CD4-positive, alpha-beta T cell (primary cell): ENCODE measurements at regions of chr20 and their contacts with region 1.

Region 1: DNA sequence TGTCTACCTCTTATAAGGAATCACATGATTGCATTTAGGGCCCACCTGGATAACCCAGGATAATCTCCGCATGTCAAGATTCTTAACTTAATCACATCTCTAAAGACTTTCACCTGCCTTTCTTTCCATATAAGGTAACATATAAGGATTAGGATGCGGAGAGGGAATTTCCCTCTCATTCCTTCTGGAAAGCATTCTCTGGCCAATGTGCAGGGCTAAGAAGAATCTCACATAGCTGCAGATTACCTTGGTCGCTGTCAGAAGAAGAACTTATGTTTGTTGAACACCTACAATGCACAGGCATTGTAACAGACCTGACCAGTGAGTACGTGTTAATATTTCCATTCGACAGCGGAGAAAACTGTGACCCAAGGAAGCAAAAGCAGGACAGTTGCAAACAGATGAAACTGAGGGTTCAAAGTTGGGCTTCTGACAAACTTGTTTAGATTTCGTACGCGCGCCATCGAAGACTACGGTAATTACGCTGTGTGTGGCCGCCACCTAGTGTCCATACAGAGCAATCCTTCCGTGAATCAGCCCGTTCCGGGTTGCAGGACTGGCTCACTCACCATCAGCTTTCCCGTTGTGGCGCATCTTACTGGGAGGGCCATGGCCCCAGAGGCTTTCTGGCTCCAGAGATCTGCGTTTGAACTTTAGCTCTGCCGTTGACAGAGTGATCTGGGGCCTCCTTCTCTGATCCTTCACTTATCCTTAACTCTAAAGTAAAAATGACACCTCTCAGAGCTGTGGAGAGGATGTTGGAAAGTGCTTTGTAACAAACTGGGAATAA is 9.5 kb downstream of the C20orf202 start:
- DNase-seq: peak; percentile 54 to 84 (median 61)
- ATAC-seq: peak; percentile 87
- H3K4me3 ChIP-seq: no peak overlapping the region
- H3K4me3 Mint-ChIP-seq: no peak overlapping the region
- H3K27ac ChIP-seq: no peak overlapping the region
- H3K27ac Mint-ChIP-seq: no peak overlapping the region
- H3K4me1 ChIP-seq: peaks cover 30% of the 10 kb centered on the region
- H3K4me1 Mint-ChIP-seq: peaks cover 42% of the 10 kb centered on the region
- H3K27me3 ChIP-seq: no peaks in the 10 kb centered on the region
- H3K27me3 Mint-ChIP-seq: peaks cover 10% of the 10 kb centered on the region
- CTCF ChIP-seq: peak; percentile 88

Region 2: GRCh38 chr20:815914-816606 is 396.7 kb before region 1 on chr20:
- CTCF ChIA-PET with region 1: no interaction called
- POLR2A ChIA-PET with region 1: no interaction called
- intact Hi-C with region 1: loop called (anchors 1 to 2 kb)
- DNase-seq: peak; percentile 49 to 87 (median 61)
- ATAC-seq: peak; percentile 64
- H3K4me3 ChIP-seq: no peak overlapping the region
- H3K4me3 Mint-ChIP-seq: no peak overlapping the region
- H3K27ac ChIP-seq: no peak overlapping the region
- H3K27ac Mint-ChIP-seq: peak overlapping the region; percentile 12
- H3K4me1 ChIP-seq: peaks cover 4% of the 10 kb centered on the region
- H3K4me1 Mint-ChIP-seq: peaks cover 4% of the 10 kb centered on the region
- H3K27me3 ChIP-seq: no peaks in the 10 kb centered on the region
- H3K27me3 Mint-ChIP-seq: peaks cover 26% of the 10 kb centered on the region
- CTCF ChIP-seq: peak; percentile 98

Region 3: DNA sequence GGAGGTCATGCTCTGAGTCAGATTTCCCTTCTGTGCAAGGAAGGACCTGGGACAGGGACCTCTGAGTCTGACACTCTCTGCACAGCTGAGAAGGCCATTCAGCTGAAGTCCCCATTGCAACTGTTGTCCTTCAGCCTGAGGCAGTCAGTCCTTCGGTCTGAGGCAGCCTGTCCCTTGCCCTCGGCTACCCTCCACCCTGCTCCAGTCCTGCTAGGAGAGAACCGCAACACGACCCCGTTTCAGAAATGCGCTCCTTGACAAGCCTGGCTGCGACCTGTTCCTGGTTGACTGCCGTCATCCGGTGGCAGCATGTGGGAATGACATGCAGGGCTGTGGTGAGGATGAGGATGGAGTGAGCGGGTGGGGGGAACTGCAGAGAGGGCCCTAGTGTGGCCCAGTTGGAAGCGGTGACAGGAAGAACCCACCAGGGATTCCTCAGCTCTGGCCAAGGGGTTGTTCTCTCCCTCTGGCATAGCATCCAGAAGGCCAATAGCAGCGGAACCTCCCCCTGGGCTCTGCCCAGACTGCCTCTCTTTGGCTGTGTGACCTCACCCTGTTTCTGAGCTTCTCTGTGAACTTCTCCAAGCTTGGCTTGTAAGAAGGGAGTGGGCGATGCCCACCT is 256.4 kb before region 1 on chr20:
- CTCF ChIA-PET with region 1: interaction called, 3 read pairs
- POLR2A ChIA-PET with region 1: no interaction called
- intact Hi-C with region 1: loop called in 1 of 2 experiments (anchors 2 kb)
- DNase-seq: peak; percentile 56 to 84 (median 68)
- ATAC-seq: peak; percentile 88
- H3K4me3 ChIP-seq: no peak overlapping the region
- H3K4me3 Mint-ChIP-seq: no peak overlapping the region
- H3K27ac ChIP-seq: no peak overlapping the region
- H3K27ac Mint-ChIP-seq: no peak overlapping the region
- H3K4me1 ChIP-seq: peaks cover 4% of the 10 kb centered on the region
- H3K4me1 Mint-ChIP-seq: peaks cover 5% of the 10 kb centered on the region
- H3K27me3 ChIP-seq: peaks cover 11 to 17% of the 10 kb centered on the region in 2 experiments
- H3K27me3 Mint-ChIP-seq: peaks cover 66% of the 10 kb centered on the region
- CTCF ChIP-seq: peak; percentile 99

Region 4: GRCh38 chr20:973785-974194 is 239.0 kb before region 1 on chr20:
- CTCF ChIA-PET with region 1: no interaction called
- POLR2A ChIA-PET with region 1: no interaction called
- intact Hi-C with region 1: loop called (anchors 2 to 5 kb)
- DNase-seq: peak in 6 of 14 experiments; percentile 4 to 60 (median 24)
- ATAC-seq: peak; percentile 85
- H3K4me3 ChIP-seq: no peak overlapping the region
- H3K4me3 Mint-ChIP-seq: no peak overlapping the region
- H3K27ac ChIP-seq: no peak overlapping the region
- H3K27ac Mint-ChIP-seq: no peak overlapping the region
- H3K4me1 ChIP-seq: peaks cover 5% of the 10 kb centered on the region
- H3K4me1 Mint-ChIP-seq: no peaks in the 10 kb centered on the region
- H3K27me3 ChIP-seq: no peaks in the 10 kb centered on the region
- H3K27me3 Mint-ChIP-seq: peaks cover 5% of the 10 kb centered on the region
- CTCF ChIP-seq: peak; percentile 36

Region 5: GRCh38 chr20:1050440-1050839 is 162.4 kb before region 1 on chr20:
- CTCF ChIA-PET with region 1: no interaction called
- POLR2A ChIA-PET with region 1: no interaction called
- intact Hi-C with region 1: no loop called
- DNase-seq: no peak
- ATAC-seq: no peak
- H3K4me3 ChIP-seq: no peak overlapping the region
- H3K4me3 Mint-ChIP-seq: no peak overlapping the region
- H3K27ac ChIP-seq: no peak overlapping the region
- H3K27ac Mint-ChIP-seq: no peak overlapping the region
- H3K4me1 ChIP-seq: no peaks in the 10 kb centered on the region
- H3K4me1 Mint-ChIP-seq: no peaks in the 10 kb centered on the region
- H3K27me3 ChIP-seq: no peaks in the 10 kb centered on the region
- H3K27me3 Mint-ChIP-seq: no peaks in the 10 kb centered on the region
- CTCF ChIP-seq: no peak

Region 6: DNA sequence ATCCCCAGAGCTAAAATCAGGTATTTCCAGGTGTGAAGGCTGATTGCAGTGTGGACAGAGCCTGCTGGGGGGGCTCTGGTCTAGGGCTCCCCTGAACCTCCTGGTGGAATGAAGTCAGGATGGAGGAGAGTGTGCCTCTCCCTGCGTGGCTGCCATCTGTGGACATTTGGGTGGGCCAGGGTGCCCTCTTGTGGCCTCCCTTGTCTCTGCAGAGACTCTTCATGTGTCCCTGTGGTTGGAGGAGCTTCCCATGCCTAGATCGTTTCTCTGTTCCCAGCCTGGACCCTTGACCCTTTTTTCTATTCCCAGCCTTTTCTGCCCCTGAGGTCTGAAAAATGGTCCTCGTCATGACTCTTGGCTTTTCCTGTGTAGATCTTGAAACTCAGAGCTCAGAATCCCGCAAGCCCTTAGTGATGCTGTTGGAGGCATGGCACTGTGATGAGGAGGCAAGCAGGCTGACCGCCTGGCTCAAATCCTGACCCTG is 104.3 kb before region 1 on chr20:
- CTCF ChIA-PET with region 1: interaction called, 10 read pairs
- POLR2A ChIA-PET with region 1: interaction called, 3 read pairs
- intact Hi-C with region 1: loop called (anchors 2 kb)
- DNase-seq: peak; percentile 17 to 69 (median 44)
- ATAC-seq: peak; percentile 79
- H3K4me3 ChIP-seq: no peak overlapping the region
- H3K4me3 Mint-ChIP-seq: no peak overlapping the region
- H3K27ac ChIP-seq: no peak overlapping the region
- H3K27ac Mint-ChIP-seq: no peak overlapping the region
- H3K4me1 ChIP-seq: peaks cover 6% of the 10 kb centered on the region
- H3K4me1 Mint-ChIP-seq: peaks cover 7% of the 10 kb centered on the region
- H3K27me3 ChIP-seq: no peaks in the 10 kb centered on the region
- H3K27me3 Mint-ChIP-seq: peaks cover 6% of the 10 kb centered on the region
- CTCF ChIP-seq: peak; percentile 67

Region 7: DNA sequence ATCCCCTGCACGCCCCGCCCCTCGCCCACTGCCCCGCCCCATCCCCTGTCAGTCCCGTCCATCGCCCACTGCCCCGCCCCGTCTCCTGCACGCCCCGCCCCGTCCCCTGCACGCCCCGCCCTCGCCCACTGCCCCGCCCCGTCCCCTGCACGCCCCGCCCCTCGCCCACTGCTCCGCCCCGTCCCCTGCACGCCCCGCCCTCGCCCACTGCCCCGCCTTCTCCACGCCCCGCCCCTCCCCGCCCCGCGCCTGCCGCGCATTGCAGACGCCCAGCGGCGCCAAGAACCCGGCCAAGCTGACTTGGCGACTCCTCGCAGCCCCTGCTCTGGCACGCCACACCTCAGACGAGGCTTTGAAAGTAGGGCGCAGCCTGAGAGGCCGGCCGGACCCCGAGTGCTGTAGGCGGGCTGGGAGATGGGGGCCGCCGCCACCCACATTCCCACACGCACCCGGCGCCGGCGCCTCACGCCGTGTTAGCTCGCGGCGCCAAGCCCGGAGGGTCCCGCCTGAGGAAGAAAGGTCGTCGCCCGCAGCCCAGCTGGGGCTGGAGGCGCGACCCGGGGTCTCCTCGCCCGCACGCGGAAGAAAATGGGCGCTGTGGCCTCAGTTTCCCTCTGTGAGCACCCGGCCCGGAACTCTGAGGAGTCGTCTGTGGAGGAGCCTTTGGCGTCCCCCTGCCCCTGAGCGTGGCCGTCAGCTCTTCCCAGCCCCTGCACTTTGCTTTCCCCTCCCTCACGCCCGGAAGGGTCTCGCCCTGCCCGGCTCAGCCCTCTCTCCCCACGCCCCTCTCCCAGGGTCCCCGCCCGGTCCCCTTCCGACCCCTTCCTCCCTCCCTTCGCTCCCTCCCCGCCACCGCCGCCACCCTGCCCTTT is 13.2 kb after region 1 on chr20 and contains the start of gene RAD21L1:
- CTCF ChIA-PET with region 1: interaction called, 20 read pairs
- POLR2A ChIA-PET with region 1: interaction called, 4 read pairs
- intact Hi-C with region 1: no loop called
- DNase-seq: peak; percentile 73 to 92 (median 80)
- ATAC-seq: peak; percentile 80
- H3K4me3 ChIP-seq: peak within 1 kb of the TSS; percentile 77
- H3K4me3 Mint-ChIP-seq: peak within 1 kb of the TSS; percentile 92
- H3K27ac ChIP-seq: peak within 1 kb of the TSS in 1 of 2 donors; percentile 22
- H3K27ac Mint-ChIP-seq: peak within 1 kb of the TSS; percentile 53
- H3K4me1 ChIP-seq: peaks cover 18% of the 10 kb centered on the region
- H3K4me1 Mint-ChIP-seq: peaks cover 19% of the 10 kb centered on the region
- H3K27me3 ChIP-seq: peaks cover 0 to 15% of the 10 kb centered on the region in 2 experiments
- H3K27me3 Mint-ChIP-seq: peaks cover 21% of the 10 kb centered on the region
- CTCF ChIP-seq: no peak
- total RNA-seq, gene RAD21L1: 0.58 TPM in 1 of 2 experiments, not detected in the other

Region 8: DNA sequence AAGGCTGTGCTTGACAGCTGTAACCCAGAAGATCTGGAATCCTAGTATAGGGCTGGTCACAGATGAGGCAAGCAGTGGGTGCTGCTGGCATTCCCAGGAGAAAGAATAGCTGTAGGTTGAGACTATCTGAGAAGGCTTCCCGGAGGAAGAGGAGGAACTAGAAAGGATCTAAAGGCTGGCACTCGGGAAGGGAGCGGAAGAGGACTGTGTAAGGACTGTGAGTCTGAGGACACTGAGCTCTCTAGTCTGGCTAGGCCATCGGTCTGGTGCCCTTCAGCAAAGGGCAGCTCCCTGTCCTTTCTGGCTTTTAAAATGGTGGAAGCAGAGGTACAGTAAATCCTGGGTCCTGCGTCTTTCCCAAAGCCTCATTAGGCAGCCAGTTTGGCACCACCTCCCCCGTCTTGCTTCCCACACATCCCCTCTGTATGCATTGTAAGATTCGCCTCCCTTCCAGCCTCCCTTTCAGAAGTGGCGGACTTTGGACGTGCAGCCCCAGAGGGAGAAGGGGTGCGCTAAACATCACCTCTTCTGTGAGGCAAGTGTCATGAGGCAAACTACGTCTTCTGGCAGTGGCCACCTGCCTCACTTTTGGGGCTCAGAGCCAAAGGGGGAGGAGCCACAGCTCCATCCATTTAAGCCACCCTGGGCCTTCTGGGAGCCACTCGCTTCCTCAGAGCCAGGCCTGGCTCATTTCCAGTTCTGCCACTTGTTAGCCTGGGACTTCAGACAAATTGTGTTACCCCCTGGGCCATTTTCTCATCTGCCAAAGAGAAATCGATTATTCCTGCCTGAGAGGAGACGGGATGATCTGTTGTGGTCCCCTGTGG is 61.9 kb after region 1 on chr20:
- CTCF ChIA-PET with region 1: no interaction called
- POLR2A ChIA-PET with region 1: no interaction called
- intact Hi-C with region 1: no loop called
- DNase-seq: no peak
- ATAC-seq: no peak
- H3K4me3 ChIP-seq: no peak overlapping the region
- H3K4me3 Mint-ChIP-seq: no peak overlapping the region
- H3K27ac ChIP-seq: no peak overlapping the region
- H3K27ac Mint-ChIP-seq: peak overlapping the region; percentile 15
- H3K4me1 ChIP-seq: peaks cover 17% of the 10 kb centered on the region
- H3K4me1 Mint-ChIP-seq: peaks cover 48% of the 10 kb centered on the region
- H3K27me3 ChIP-seq: no peaks in the 10 kb centered on the region
- H3K27me3 Mint-ChIP-seq: no peaks in the 10 kb centered on the region
- CTCF ChIP-seq: no peak

Region 9: GRCh38 chr20:1437235-1437904 is 224.6 kb after region 1 on chr20:
- CTCF ChIA-PET with region 1: no interaction called
- POLR2A ChIA-PET with region 1: no interaction called
- intact Hi-C with region 1: loop called (anchors 5 to 10 kb)
- DNase-seq: peak; percentile 68 to 90 (median 75)
- ATAC-seq: peak; percentile 70
- H3K4me3 ChIP-seq: no peak overlapping the region
- H3K4me3 Mint-ChIP-seq: no peak overlapping the region
- H3K27ac ChIP-seq: no peak overlapping the region
- H3K27ac Mint-ChIP-seq: no peak overlapping the region
- H3K4me1 ChIP-seq: peaks cover 27% of the 10 kb centered on the region
- H3K4me1 Mint-ChIP-seq: peaks cover 56% of the 10 kb centered on the region
- H3K27me3 ChIP-seq: no peaks in the 10 kb centered on the region
- H3K27me3 Mint-ChIP-seq: no peaks in the 10 kb centered on the region
- CTCF ChIP-seq: peak; percentile 90